Activated T-helper 1 cell treated with anti-CD3 and anti-CD28 coated beads, Interleukin-12 subunit alpha, Interleukin-12 subunit beta, Interleukin-2, Interleukin-4 antibody, amounts not matched to agents 30 ng/mL and 10 ng/mL and 1 ng/mL, durations not matched to agents 14 hours and 24 hours and 36 hours (primary cell): ENCODE measurements at regions of chr3 and their contacts with region 1.

Region 1: GRCh38 chr3:86969500-86970189 is 21.3 kb downstream of the VGLL3 start:
- DNase-seq: peak; percentile 9
- H3K4me3 Mint-ChIP-seq: no peak overlapping the region
- H3K27ac Mint-ChIP-seq: no peak overlapping the region
- H3K4me1 Mint-ChIP-seq: no peaks in the 10 kb centered on the region
- H3K27me3 Mint-ChIP-seq: no peaks in the 10 kb centered on the region

Region 2: GRCh38 chr3:87082796-87083440 is 113.3 kb after region 1 on chr3:
- intact Hi-C with region 1: loop called (anchors 1 kb)
- DNase-seq: no peak
- H3K4me3 Mint-ChIP-seq: no peak overlapping the region
- H3K27ac Mint-ChIP-seq: no peak overlapping the region
- H3K4me1 Mint-ChIP-seq: peaks cover 12% of the 10 kb centered on the region
- H3K27me3 Mint-ChIP-seq: no peaks in the 10 kb centered on the region

Region 3: GRCh38 chr3:87167628-87168456 is 198.2 kb after region 1 on chr3:
- intact Hi-C with region 1: loop called (anchors 1 kb)
- DNase-seq: peak; percentile 16
- H3K4me3 Mint-ChIP-seq: no peak overlapping the region
- H3K27ac Mint-ChIP-seq: no peak overlapping the region
- H3K4me1 Mint-ChIP-seq: peaks cover 4% of the 10 kb centered on the region
- H3K27me3 Mint-ChIP-seq: peaks cover 2% of the 10 kb centered on the region